ENCODE measurements at regions of chr5 and their contacts with region 1.

Region 1: DNA sequence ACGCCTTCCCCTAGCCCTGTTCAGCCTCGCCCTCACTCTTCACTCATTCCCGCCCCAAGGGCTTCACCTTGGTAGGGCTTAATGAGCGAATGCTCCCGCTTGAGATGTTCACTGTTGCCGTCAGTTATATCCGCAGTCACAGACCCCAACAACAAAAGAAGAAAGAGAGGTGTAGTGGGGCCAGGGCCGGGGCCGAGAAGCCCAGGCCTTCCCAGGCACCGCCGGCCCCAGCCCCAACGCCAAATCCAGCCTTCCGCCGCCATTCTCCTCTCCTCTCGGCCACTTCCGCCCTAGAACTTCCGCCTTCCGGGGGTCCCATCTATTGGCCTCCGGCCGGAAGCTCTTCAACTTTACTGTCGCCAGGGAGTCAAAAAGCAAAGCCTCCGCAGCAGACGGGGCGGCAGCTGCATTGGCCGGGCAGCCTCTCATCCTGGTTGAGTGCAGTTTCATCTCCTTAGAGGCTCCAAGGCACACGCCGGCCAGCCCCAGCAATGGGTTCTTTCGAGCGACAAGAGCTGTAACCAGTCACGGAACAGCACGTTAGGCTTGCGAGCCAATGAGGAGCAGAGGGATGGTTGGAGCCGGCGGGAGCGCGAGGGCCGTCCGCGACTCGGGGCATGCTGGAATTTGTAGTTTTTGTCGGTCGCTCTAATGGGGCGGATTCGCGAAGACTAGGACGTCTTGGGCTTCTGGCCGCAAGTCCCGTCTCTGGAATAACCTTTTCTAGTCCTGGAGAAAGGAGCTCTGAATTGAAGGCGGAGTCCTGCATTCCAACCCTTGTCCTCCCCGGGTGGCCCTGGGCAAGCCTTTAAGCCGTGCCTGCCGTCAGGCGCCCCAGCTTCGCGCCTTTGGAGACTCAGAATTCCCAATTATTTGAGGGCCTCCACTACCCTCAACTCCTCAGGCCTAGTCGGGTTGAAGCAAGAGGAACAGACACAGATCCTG is at the start of gene LMAN2:
- DNase-seq: peak; percentile 82 to 97 (median 91)
- ATAC-seq: peak; percentile 97
- H3K4me3 ChIP-seq: peak within 1 kb of the TSS; percentile 79 to 90
- H3K4me3 Mint-ChIP-seq: peak within 1 kb of the TSS; percentile 96
- H3K27ac ChIP-seq: peak within 1 kb of the TSS; percentile 89 to 91
- H3K27ac Mint-ChIP-seq: peak within 1 kb of the TSS; percentile 99
- H3K4me1 ChIP-seq: peaks cover 55% of the 10 kb centered on the region
- H3K4me1 Mint-ChIP-seq: peaks cover 72% of the 10 kb centered on the region
- H3K27me3 ChIP-seq: no peaks in the 10 kb centered on the region
- H3K27me3 Mint-ChIP-seq: no peaks in the 10 kb centered on the region
- CTCF ChIP-seq: no peak
- total RNA-seq, gene LMAN2: 49.0 to 61.4 TPM

Region 2: GRCh38 chr5:175501759-175502339 is 1849.8 kb before region 1 on chr5:
- CTCF ChIA-PET with region 1: no interaction called
- POLR2A ChIA-PET with region 1: no interaction called
- intact Hi-C with region 1: loop called in 1 of 2 experiments (anchors 10 kb)
- DNase-seq: peak in 1 of 9 experiments; percentile 23
- ATAC-seq: no peak
- H3K4me3 ChIP-seq: no peak overlapping the region
- H3K4me3 Mint-ChIP-seq: no peak overlapping the region
- H3K27ac ChIP-seq: no peak overlapping the region
- H3K27ac Mint-ChIP-seq: peak overlapping the region; percentile 64
- H3K4me1 ChIP-seq: peaks cover 2% of the 10 kb centered on the region
- H3K4me1 Mint-ChIP-seq: peaks cover 39% of the 10 kb centered on the region
- H3K27me3 ChIP-seq: no peaks in the 10 kb centered on the region
- H3K27me3 Mint-ChIP-seq: no peaks in the 10 kb centered on the region
- CTCF ChIP-seq: no peak

Region 3: DNA sequence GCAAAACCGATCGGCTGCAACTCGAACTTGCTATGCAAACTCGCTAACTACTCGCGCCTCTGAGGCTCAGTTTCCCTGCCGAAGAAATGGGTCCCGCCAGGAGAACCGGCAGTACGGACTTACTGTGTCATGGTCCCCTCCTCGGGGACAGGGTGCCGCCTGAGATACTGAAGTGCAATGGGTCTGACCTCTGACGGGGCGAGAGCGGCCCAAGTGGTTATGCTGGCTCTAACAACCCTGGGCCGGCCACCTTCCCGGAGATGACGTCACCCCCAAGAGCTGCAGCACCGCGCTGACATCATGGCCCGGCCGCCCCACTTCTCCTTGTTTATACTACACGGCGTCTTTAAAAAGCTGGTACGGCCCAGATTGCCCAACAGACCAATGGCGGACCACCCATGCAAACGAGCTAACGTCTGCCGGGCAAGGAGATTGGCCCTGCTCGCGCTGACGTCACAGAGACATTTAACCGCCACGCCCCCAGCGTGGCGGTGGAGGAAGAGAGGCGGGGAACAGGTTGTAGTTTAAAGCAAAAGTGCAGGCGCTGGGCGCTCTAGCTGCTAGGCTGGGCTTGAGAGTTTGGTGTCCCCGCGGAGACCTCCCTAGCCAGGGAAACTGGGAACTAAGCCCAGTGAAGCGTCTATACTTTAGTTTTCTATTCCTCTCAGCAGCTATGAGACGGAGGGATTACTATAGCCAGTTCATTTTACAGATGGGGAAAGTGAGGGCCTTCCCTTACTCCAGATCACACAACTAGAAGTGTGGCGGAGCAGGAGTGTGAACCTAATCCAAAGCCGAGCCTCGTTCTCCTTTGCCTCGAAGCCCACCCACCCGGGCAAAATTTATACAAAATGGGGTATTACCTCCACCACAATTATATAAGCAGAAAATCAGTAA is 813.8 kb before region 1 on chr5:
- CTCF ChIA-PET with region 1: no interaction called
- POLR2A ChIA-PET with region 1: no interaction called
- intact Hi-C with region 1: loop called in 1 of 2 experiments (anchors 10 kb)
- DNase-seq: peak; percentile 94 to 100 (median 96)
- ATAC-seq: peak; percentile 70
- H3K4me3 ChIP-seq: peak overlapping the region; percentile 84 to 97
- H3K4me3 Mint-ChIP-seq: peak overlapping the region; percentile 98
- H3K27ac ChIP-seq: peak overlapping the region; percentile 95 to 99
- H3K27ac Mint-ChIP-seq: peak overlapping the region; percentile 100
- H3K4me1 ChIP-seq: peaks cover 70% of the 10 kb centered on the region
- H3K4me1 Mint-ChIP-seq: peaks cover 70% of the 10 kb centered on the region
- H3K27me3 ChIP-seq: no peaks in the 10 kb centered on the region
- H3K27me3 Mint-ChIP-seq: no peaks in the 10 kb centered on the region
- CTCF ChIP-seq: no peak

Region 4: GRCh38 chr5:177317959-177318377 is 33.7 kb before region 1 on chr5:
- CTCF ChIA-PET with region 1: interaction called, 15 read pairs
- POLR2A ChIA-PET with region 1: interaction called, 3 read pairs
- intact Hi-C with region 1: no loop called
- DNase-seq: peak; percentile 52 to 85 (median 75)
- ATAC-seq: peak; percentile 81
- H3K4me3 ChIP-seq: no peak overlapping the region
- H3K4me3 Mint-ChIP-seq: no peak overlapping the region
- H3K27ac ChIP-seq: no peak overlapping the region
- H3K27ac Mint-ChIP-seq: no peak overlapping the region
- H3K4me1 ChIP-seq: peaks cover 10% of the 10 kb centered on the region
- H3K4me1 Mint-ChIP-seq: peaks cover 14% of the 10 kb centered on the region
- H3K27me3 ChIP-seq: no peaks in the 10 kb centered on the region
- H3K27me3 Mint-ChIP-seq: no peaks in the 10 kb centered on the region
- CTCF ChIP-seq: peak; percentile 90

Region 5: DNA sequence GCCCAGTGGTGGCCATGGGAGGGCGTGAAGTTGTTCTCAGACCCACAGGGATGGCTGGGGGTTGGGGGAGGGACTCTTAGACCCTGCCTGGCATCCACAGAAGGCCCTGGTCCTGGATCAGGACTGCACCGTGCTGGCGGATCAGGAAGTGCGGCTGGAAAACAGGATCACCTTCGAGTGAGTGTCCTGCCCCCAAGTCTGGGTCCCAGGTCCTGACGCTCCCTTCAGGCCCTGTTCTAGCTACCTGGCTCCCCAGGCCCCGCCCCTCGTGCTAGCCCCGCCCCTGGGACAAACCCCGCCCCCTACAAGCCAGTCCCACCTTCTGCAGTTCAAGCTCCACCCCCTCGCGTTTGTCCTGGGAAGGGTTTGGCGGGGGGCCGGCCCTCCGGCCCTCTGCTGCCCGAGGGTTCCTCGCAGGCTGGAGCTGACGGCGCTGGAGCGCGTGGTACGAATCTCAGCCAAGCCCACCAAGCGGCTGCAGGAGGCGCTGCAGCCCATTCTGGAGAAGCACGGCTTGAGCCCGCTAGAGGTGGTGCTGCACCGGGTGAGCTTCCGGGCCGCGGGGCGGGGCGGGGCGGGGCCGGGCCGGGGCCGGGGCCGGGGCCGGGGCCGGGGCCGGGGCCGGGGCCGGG is 18.9 kb after region 1 on chr5:
- CTCF ChIA-PET with region 1: interaction called, 17 read pairs
- POLR2A ChIA-PET with region 1: interaction called, 24 read pairs
- intact Hi-C with region 1: no loop called
- DNase-seq: peak in 8 of 9 experiments; percentile 18 to 81 (median 58)
- ATAC-seq: peak; percentile 63
- H3K4me3 ChIP-seq: no peak overlapping the region
- H3K4me3 Mint-ChIP-seq: no peak overlapping the region
- H3K27ac ChIP-seq: peak overlapping the region in 1 of 2 experiments; percentile 48
- H3K27ac Mint-ChIP-seq: peak overlapping the region; percentile 32
- H3K4me1 ChIP-seq: peaks cover 73% of the 10 kb centered on the region
- H3K4me1 Mint-ChIP-seq: peaks cover 69% of the 10 kb centered on the region
- H3K27me3 ChIP-seq: no peaks in the 10 kb centered on the region
- H3K27me3 Mint-ChIP-seq: no peaks in the 10 kb centered on the region
- CTCF ChIP-seq: no peak

Region 6: DNA sequence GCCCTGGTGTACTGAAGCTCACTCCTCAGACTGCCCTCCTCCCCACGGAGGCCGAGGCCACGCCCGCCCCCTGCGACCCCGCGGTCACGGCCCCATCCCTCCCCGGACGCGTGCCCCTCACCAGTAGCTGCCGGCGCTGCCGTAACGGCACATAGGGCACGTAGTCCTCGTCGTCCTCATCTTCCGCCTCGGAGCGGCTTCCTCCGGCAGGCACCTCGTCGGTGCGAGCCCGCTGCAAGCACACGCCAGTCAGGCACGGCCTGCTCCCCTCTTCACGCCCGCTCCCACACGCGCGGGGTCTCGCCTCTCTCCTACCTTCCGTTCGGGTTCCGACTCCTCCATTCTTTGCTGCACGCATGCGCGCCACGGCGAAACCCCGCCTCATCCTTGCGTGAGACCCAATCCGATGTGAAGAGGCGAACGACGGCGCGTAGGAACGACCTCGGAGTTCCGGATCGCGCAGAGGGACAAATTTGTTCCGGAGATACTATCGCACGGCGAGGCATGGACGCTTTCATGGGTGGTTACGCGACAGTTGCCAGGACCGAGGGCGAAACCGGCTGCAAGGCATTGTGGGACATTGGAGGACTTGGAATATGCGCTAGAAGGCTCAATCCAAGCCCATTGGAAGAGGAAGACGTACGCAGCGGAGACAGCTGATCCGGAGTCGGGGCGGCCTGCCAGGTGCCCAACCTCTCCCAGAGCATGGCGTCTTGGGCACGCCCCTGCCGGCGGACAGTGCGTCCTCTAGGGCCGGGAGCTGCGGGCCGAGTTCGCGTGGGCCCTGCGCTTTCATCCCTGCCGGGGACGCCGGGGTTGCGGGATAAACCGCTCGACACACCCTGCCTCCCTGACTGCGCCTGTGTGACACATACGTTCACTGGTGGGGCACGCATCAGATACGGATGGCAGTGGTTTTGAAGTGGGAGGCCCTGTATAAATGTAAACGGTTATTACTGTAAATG is 165.2 kb after region 1 on chr5 and contains the start of gene DDX41:
- CTCF ChIA-PET with region 1: no interaction called
- POLR2A ChIA-PET with region 1: no interaction called
- intact Hi-C with region 1: loop called in 1 of 2 experiments (anchors 1 kb)
- DNase-seq: peak; percentile 88 to 98 (median 95)
- ATAC-seq: peak; percentile 88
- H3K4me3 ChIP-seq: peak within 1 kb of the TSS; percentile 95
- H3K4me3 Mint-ChIP-seq: peak within 1 kb of the TSS; percentile 94
- H3K27ac ChIP-seq: peak within 1 kb of the TSS; percentile 61 to 73
- H3K27ac Mint-ChIP-seq: peak within 1 kb of the TSS; percentile 93
- H3K4me1 ChIP-seq: peaks cover 31% of the 10 kb centered on the region
- H3K4me1 Mint-ChIP-seq: peaks cover 46% of the 10 kb centered on the region
- H3K27me3 ChIP-seq: no peaks in the 10 kb centered on the region
- H3K27me3 Mint-ChIP-seq: no peaks in the 10 kb centered on the region
- CTCF ChIP-seq: no peak
- total RNA-seq, gene DDX41: 66.8 to 71.0 TPM

Region 7: GRCh38 chr5:177592010-177592834 is 240.6 kb after region 1 on chr5 and contains the start of gene TMED9:
- CTCF ChIA-PET with region 1: no interaction called
- POLR2A ChIA-PET with region 1: interaction called, 3 read pairs
- intact Hi-C with region 1: loop called in 1 of 2 experiments (anchors 10 kb)
- DNase-seq: peak; percentile 69 to 92 (median 86)
- ATAC-seq: peak; percentile 98
- H3K4me3 ChIP-seq: peak within 1 kb of the TSS; percentile 97 to 100
- H3K4me3 Mint-ChIP-seq: peak within 1 kb of the TSS; percentile 99
- H3K27ac ChIP-seq: peak within 1 kb of the TSS; percentile 78 to 88
- H3K27ac Mint-ChIP-seq: peak within 1 kb of the TSS; percentile 93
- H3K4me1 ChIP-seq: peaks cover 19% of the 10 kb centered on the region
- H3K4me1 Mint-ChIP-seq: peaks cover 24% of the 10 kb centered on the region
- H3K27me3 ChIP-seq: peaks cover 0 to 3% of the 10 kb centered on the region in 2 experiments
- H3K27me3 Mint-ChIP-seq: peaks cover 13% of the 10 kb centered on the region
- CTCF ChIP-seq: no peak
- total RNA-seq, gene TMED9: 42.4 to 52.2 TPM